HepG2 (cell line): ENCODE measurements at regions of chr17 and their contacts with region 1.

Region 1: GRCh38 chr17:59753522-59754467 is 46.3 kb downstream of the VMP1 start:
- DNase-seq: peak; percentile 88
- ATAC-seq: peak; percentile 84
- H3K4me3 ChIP-seq: no peak overlapping the region; a peak in 1 of 6 replicates
- H3K27ac ChIP-seq: peak overlapping the region; percentile 82
- H3K4me1 ChIP-seq: peaks cover 82% of the 10 kb centered on the region
- H3K27me3 ChIP-seq: no peaks in the 10 kb centered on the region
- CTCF ChIP-seq: peak; percentile 85
- EP300 ChIP-seq: no peak
- POLR2A ChIP-seq: no peak
- RAD21 ChIP-seq: peak; percentile 86

Region 2: GRCh38 chr17:59786536-59787319 is 32.9 kb after region 1 on chr17:
- CTCF ChIA-PET with region 1: no interaction called
- POLR2A ChIA-PET with region 1: interaction called, 124 read pairs
- in situ Hi-C with region 1: loop called (anchors 5 kb)
- intact Hi-C with region 1: loop called (anchors 1 kb)
- DNase-seq: peak; percentile 100
- ATAC-seq: peak; percentile 97
- H3K4me3 ChIP-seq: peak overlapping the region in 1 of 3 experiments; percentile 51; a peak in 2 of 6 replicates
- H3K27ac ChIP-seq: peak overlapping the region; percentile 97
- H3K4me1 ChIP-seq: peaks cover 94% of the 10 kb centered on the region
- H3K27me3 ChIP-seq: no peaks in the 10 kb centered on the region
- CTCF ChIP-seq: peak; percentile 20
- EP300 ChIP-seq: peak; percentile 93 to 100
- POLR2A ChIP-seq: peak; percentile 65 to 86
- RAD21 ChIP-seq: no peak

Region 3: GRCh38 chr17:59829217-59830006 is 75.6 kb after region 1 on chr17:
- CTCF ChIA-PET with region 1: interaction called, 8 read pairs
- POLR2A ChIA-PET with region 1: interaction called, 11 read pairs
- in situ Hi-C with region 1: no loop called
- intact Hi-C with region 1: no loop called
- DNase-seq: peak; percentile 97
- ATAC-seq: peak; percentile 94
- H3K4me3 ChIP-seq: peak overlapping the region in 1 of 3 experiments; percentile 26; a peak in 1 of 6 replicates
- H3K27ac ChIP-seq: peak overlapping the region; percentile 90
- H3K4me1 ChIP-seq: peaks cover 84% of the 10 kb centered on the region
- H3K27me3 ChIP-seq: no peaks in the 10 kb centered on the region
- CTCF ChIP-seq: no peak
- EP300 ChIP-seq: peak; percentile 51 to 61; a peak in 2 of 4 replicates
- POLR2A ChIP-seq: 0 out of 4 replicates have a peak, but pooled peaks of 1 of the 2 experiments have one; percentile 20
- RAD21 ChIP-seq: no peak; the same call in 1 of the 2 replicates

Region 4: DNA sequence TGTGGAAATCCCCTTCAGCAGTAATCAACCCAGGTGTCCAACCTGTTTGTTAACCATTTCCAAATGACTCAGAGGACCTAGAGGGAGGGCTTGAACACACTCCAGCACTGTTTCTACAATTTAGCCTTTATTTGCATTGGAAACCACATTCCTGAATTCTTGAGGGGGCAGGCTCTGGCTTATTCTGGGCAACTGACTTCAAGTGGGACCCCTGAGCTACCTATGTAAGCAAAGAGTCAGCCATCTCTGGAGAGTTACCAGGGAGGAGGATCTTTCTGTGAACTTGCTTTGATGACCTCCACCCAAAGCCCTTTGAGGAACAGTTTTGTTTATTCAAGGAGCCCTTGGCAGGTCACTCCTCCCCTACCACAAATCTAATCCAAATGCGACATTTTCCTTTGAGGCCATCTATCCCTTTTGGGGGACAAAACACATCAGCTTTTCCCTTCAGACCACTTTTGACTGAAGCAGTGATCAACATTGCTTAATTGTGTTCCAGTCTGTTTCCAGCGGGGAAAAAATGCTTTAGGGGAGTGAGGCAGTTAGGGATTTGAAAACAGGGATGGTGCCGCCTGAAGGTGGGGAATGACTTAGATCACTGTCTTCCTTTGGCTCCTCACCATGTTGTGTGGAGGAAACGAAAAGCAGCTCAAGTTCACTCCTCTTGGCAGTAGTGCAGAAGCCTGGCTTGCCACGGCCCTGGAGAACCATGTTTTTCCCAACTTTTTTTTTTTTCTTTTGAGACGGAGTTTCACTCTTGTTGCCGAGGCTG is 92.8 kb after region 1 on chr17:
- CTCF ChIA-PET with region 1: interaction called, 5 read pairs
- POLR2A ChIA-PET with region 1: interaction called, 400 read pairs
- in situ Hi-C with region 1: no loop called
- intact Hi-C with region 1: loop called (anchors 1 kb)
- DNase-seq: peak; percentile 99
- ATAC-seq: peak; percentile 45
- H3K4me3 ChIP-seq: peak overlapping the region; percentile 13 to 54 (median 20)
- H3K27ac ChIP-seq: peak overlapping the region; percentile 98
- H3K4me1 ChIP-seq: peaks cover 94% of the 10 kb centered on the region
- H3K27me3 ChIP-seq: no peaks in the 10 kb centered on the region
- CTCF ChIP-seq: no peak; the same call in 1 of the 2 replicates
- EP300 ChIP-seq: peak; percentile 79 to 92; a peak in 3 of 4 replicates
- POLR2A ChIP-seq: peak in 1 of 2 experiments; percentile 73; a peak in 3 of 4 replicates
- RAD21 ChIP-seq: peak; percentile 28; the same call in 1 of the 2 replicates

Region 5: DNA sequence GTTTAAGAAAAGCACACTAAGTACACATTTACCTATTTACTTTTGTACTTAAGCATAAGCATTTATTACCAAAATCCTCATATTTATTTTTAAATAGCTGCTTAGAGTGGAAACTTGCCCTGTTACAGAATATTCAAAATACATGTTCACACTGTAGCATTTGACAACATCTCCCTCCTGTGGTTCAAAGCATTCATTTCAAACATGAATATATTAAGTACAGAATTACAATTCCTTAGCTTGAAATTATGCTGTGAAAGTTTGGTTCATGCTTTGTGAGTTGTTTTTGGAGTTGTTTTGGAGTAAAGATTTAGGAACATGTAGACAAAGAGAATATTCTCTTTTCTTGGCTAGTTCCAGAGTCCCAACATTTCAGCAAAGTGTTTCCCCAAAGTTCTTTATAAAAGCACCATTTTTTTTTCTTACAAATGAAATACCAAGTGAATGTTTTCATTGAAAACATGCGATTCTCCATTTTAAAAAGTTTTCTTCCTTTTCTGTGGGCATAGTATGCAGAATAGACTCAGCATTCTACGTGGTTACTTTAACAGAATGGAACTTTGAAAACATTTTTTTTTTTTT is 105.7 kb after region 1 on chr17:
- CTCF ChIA-PET with region 1: interaction called, 39 read pairs
- POLR2A ChIA-PET with region 1: no interaction called
- in situ Hi-C with region 1: no loop called
- intact Hi-C with region 1: loop called (anchors 1 kb)
- DNase-seq: peak; percentile 71
- ATAC-seq: no peak
- H3K4me3 ChIP-seq: no peak overlapping the region
- H3K27ac ChIP-seq: no peak overlapping the region
- H3K4me1 ChIP-seq: peaks cover 54% of the 10 kb centered on the region
- H3K27me3 ChIP-seq: no peaks in the 10 kb centered on the region
- CTCF ChIP-seq: peak; percentile 68
- EP300 ChIP-seq: no peak
- POLR2A ChIP-seq: no peak
- RAD21 ChIP-seq: peak; percentile 87